ENCODE measurements at regions of chr3 and their contacts with region 1.

Region 1: DNA sequence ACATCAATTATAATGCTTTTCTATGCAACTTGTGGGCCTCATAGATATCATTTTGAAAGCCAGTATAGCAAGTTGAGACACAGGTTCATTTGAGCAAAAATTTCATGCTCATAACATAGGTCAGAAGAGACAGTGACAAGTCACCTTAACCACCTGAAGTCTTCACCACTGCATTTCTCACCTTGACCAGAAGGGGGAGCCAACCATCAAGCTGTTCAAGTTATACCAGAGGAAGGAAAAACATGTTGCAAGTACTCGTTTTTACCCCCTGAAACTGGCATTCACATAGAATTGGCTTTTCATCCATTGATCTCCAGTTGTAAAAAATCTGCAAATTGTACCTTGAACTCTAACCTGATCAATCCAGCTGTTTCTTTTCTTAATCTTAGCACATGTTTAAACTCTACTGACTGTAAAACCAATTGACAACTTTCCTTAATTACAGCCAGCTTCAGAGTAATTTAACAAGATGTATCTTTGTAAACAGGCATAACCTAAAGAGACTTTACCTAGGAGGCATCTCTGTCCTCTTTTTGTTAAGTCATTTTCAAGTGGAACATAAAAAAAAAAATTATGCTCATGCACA is 1.4 kb downstream of the LMOD3 start:
- DNase-seq: peak; percentile 27
- H3K4me3 ChIP-seq: no peak overlapping the region
- H3K27ac ChIP-seq: no peak overlapping the region
- H3K27me3 ChIP-seq: peaks cover 2% of the 10 kb centered on the region
- CTCF ChIP-seq: peak; percentile 99

Region 2: GRCh38 chr3:69051756-69052471 is 69.1 kb before region 1 on chr3 and contains the start of gene TMF1:
- CTCF ChIA-PET with region 1: interaction called, 12 read pairs
- POLR2A ChIA-PET with region 1: no interaction called
- DNase-seq: peak; percentile 99
- H3K4me3 ChIP-seq: peak within 1 kb of the TSS; percentile 93
- H3K27ac ChIP-seq: peak within 1 kb of the TSS; percentile 98
- H3K27me3 ChIP-seq: no peaks in the 10 kb centered on the region
- CTCF ChIP-seq: no peak
- polyA plus RNA-seq, gene TMF1: 18.1 and 21.1 TPM in 2 replicates

Region 3: GRCh38 chr3:69094467-69095205 is 26.3 kb before region 1 on chr3:
- CTCF ChIA-PET with region 1: interaction called, 13 read pairs
- POLR2A ChIA-PET with region 1: no interaction called
- DNase-seq: no peak
- H3K4me3 ChIP-seq: no peak overlapping the region
- H3K27ac ChIP-seq: peak overlapping the region; percentile 42
- H3K27me3 ChIP-seq: no peaks in the 10 kb centered on the region
- CTCF ChIP-seq: no peak

Region 4: DNA sequence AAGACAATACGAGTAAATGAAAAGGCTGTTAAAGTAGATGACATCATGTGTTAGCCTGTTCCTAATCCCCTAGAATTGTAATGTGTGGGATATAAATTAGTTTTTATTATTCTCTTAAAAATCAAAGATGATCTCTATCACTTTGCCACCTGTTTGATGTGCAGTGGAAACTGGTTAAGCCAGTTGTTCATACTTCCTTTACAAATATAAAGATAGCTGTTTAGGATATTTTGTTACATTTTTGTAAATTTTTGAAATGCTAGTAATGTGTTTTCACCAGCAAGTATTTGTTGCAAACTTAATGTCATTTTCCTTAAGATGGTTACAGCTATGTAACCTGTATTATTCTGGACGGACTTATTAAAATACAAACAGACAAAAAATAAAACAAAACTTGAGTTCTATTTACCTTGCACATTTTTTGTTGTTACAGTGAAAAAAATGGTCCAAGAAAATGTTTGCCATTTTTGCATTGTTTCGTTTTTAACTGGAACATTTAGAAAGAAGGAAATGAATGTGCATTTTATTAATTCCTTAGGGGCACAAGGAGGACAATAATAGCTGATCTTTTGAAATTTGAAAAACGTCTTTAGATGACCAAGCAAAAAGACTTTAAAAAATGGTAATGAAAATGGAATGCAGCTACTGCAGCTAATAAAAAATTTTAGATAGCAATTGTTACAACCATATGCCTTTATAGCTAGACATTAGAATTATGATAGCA is 15.8 kb before region 1 on chr3:
- CTCF ChIA-PET with region 1: interaction called, 33 read pairs
- POLR2A ChIA-PET with region 1: no interaction called
- DNase-seq: no peak
- H3K4me3 ChIP-seq: no peak overlapping the region
- H3K27ac ChIP-seq: no peak overlapping the region
- H3K27me3 ChIP-seq: no peaks in the 10 kb centered on the region
- CTCF ChIP-seq: no peak

Region 5: GRCh38 chr3:69137412-69137811 is 16.4 kb after region 1 on chr3:
- CTCF ChIA-PET with region 1: interaction called, 10 read pairs
- POLR2A ChIA-PET with region 1: no interaction called
- DNase-seq: no peak
- H3K4me3 ChIP-seq: no peak overlapping the region
- H3K27ac ChIP-seq: no peak overlapping the region
- H3K27me3 ChIP-seq: peaks cover 3% of the 10 kb centered on the region
- CTCF ChIP-seq: no peak

Region 6: GRCh38 chr3:69240651-69241568 is 119.9 kb after region 1 on chr3:
- CTCF ChIA-PET with region 1: no interaction called
- POLR2A ChIA-PET with region 1: no interaction called
- DNase-seq: no peak
- H3K4me3 ChIP-seq: no peak overlapping the region
- H3K27ac ChIP-seq: no peak overlapping the region
- H3K27me3 ChIP-seq: peaks cover 16% of the 10 kb centered on the region
- CTCF ChIP-seq: no peak

Region 7: GRCh38 chr3:69532544-69533224 is 411.7 kb after region 1 on chr3:
- CTCF ChIA-PET with region 1: no interaction called
- POLR2A ChIA-PET with region 1: no interaction called
- DNase-seq: no peak
- H3K4me3 ChIP-seq: no peak overlapping the region
- H3K27ac ChIP-seq: peak overlapping the region; percentile 11
- H3K27me3 ChIP-seq: peaks cover 4% of the 10 kb centered on the region
- CTCF ChIP-seq: no peak

Region 8: GRCh38 chr3:69628951-69629350 is 508.0 kb after region 1 on chr3:
- CTCF ChIA-PET with region 1: no interaction called
- POLR2A ChIA-PET with region 1: no interaction called
- DNase-seq: no peak
- H3K4me3 ChIP-seq: no peak overlapping the region
- H3K27ac ChIP-seq: no peak overlapping the region
- H3K27me3 ChIP-seq: no peaks in the 10 kb centered on the region
- CTCF ChIP-seq: no peak